Naive thymus-derived CD4-positive, alpha-beta T cell (primary cell): ENCODE measurements at regions of chr3 and their contacts with region 1.

Region 1: GRCh38 chr3:103803787-103804186 is 1369.0 kb downstream of the ZPLD1 start:
- DNase-seq: no peak
- ATAC-seq: no peak
- H3K4me3 ChIP-seq: no peak overlapping the region
- H3K4me3 Mint-ChIP-seq: no peak overlapping the region
- H3K27ac ChIP-seq: no peak overlapping the region
- H3K27ac Mint-ChIP-seq: no peak overlapping the region
- H3K4me1 ChIP-seq: no peaks in the 10 kb centered on the region
- H3K4me1 Mint-ChIP-seq: no peaks in the 10 kb centered on the region
- H3K27me3 ChIP-seq: no peaks in the 10 kb centered on the region
- H3K27me3 Mint-ChIP-seq: no peaks in the 10 kb centered on the region

Region 2: GRCh38 chr3:103729547-103729946 is 74.2 kb before region 1 on chr3:
- CTCF ChIA-PET with region 1: no interaction called
- POLR2A ChIA-PET with region 1: no interaction called
- intact Hi-C with region 1: loop called in 1 of 2 experiments (anchors 2 kb)
- DNase-seq: no peak
- ATAC-seq: no peak
- H3K4me3 ChIP-seq: no peak overlapping the region
- H3K4me3 Mint-ChIP-seq: no peak overlapping the region
- H3K27ac ChIP-seq: no peak overlapping the region
- H3K27ac Mint-ChIP-seq: no peak overlapping the region
- H3K4me1 ChIP-seq: no peaks in the 10 kb centered on the region
- H3K4me1 Mint-ChIP-seq: no peaks in the 10 kb centered on the region
- H3K27me3 ChIP-seq: no peaks in the 10 kb centered on the region
- H3K27me3 Mint-ChIP-seq: no peaks in the 10 kb centered on the region

Region 3: DNA sequence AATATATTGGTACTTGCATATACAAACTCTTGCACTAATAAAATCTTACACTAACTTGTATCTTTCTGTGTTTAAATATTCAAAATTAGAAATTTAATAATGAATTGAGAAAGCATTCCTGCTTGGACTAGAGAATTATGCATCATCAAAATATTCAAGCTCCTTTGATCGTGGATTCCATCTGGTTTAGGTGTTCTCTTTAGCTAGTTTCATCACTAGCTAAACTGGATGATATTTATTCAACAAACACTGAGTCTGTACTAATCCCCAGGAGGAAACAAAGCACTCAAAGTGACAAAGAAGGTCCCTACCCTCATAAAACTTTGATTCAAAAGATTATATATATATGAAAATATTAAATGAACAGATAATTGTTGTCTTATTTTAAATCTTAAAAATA is 202.0 kb after region 1 on chr3:
- CTCF ChIA-PET with region 1: no interaction called
- POLR2A ChIA-PET with region 1: no interaction called
- intact Hi-C with region 1: no loop called
- DNase-seq: no peak
- ATAC-seq: no peak
- H3K4me3 ChIP-seq: no peak overlapping the region
- H3K4me3 Mint-ChIP-seq: no peak overlapping the region
- H3K27ac ChIP-seq: no peak overlapping the region
- H3K27ac Mint-ChIP-seq: no peak overlapping the region
- H3K4me1 ChIP-seq: no peaks in the 10 kb centered on the region
- H3K4me1 Mint-ChIP-seq: no peaks in the 10 kb centered on the region
- H3K27me3 ChIP-seq: no peaks in the 10 kb centered on the region
- H3K27me3 Mint-ChIP-seq: no peaks in the 10 kb centered on the region